A673 (cell line): ENCODE measurements at regions of chr4 and their contacts with region 1.

Region 1: DNA sequence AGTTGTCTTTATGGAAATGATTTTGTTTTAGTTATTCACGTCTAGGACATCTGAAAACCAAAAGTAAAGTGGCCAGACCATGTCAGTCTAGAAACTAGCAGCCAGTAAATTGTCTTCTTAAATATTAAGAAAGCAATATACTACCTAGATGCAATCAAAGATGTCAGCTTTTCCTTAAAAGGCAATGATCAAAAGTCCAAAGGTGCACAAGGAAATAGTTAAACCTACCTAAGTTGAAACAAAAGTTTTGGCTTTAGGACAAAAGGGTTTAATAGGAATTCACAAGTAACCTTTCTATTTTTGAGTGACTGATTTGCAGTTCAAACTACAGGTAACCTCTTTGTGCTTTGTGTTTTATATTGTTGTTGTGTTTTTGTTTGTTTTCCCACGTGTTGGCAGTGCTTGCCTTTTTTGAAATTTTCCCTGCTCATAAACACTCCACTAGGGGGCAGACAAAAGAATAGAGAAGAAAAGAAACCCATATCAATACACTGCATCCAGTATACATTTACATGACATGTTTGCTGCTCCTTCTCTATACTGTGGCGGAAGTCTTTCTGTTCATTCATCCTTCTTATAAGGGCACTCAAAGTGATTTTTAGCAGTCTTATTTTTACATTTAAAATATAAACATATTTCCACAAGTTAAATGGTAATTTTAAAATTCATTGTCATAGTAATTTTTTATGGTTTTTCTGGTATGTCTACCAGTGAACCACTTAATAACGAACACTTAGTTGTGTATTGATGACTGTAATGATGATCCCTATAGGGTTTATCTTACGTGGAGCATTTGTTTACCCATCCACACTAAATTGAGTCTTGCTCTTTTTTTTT is 62.7 kb downstream of the GAB1 start:
- DNase-seq: peak; percentile 78
- H3K4me3 ChIP-seq: no peak overlapping the region
- H3K27ac ChIP-seq: no peak overlapping the region
- H3K4me1 ChIP-seq: peaks cover 34% of the 10 kb centered on the region
- H3K27me3 ChIP-seq: no peaks in the 10 kb centered on the region
- CTCF ChIP-seq: peak; percentile 89

Region 2: DNA sequence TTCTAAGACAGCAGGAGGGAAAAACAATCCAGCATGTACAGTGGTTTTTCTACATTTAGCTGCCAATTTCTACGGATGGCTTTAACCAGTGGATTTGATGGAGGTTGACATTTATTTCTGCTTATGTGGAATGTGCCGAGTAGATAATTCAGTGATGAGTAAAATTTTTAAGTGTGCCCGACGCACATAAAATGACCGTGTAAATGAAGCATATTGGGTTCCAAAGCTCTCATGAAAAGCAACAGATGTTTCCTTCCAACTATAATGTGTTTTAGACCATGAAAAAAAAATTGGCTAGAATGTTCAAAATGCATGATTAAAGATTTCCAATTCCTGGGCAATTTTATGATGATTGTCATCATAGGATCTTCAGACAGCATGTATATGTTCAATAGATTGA is 567.3 kb before region 1 on chr4:
- CTCF ChIA-PET with region 1: no interaction called
- POLR2A ChIA-PET with region 1: no interaction called
- intact Hi-C with region 1: no loop called
- DNase-seq: no peak
- H3K4me3 ChIP-seq: no peak overlapping the region
- H3K27ac ChIP-seq: no peak overlapping the region
- H3K4me1 ChIP-seq: no peaks in the 10 kb centered on the region
- H3K27me3 ChIP-seq: no peaks in the 10 kb centered on the region
- CTCF ChIP-seq: no peak

Region 3: GRCh38 chr4:142961866-142962265 is 437.5 kb before region 1 on chr4:
- CTCF ChIA-PET with region 1: no interaction called
- POLR2A ChIA-PET with region 1: no interaction called
- intact Hi-C with region 1: no loop called
- DNase-seq: no peak
- H3K4me3 ChIP-seq: no peak overlapping the region
- H3K27ac ChIP-seq: no peak overlapping the region
- H3K4me1 ChIP-seq: no peaks in the 10 kb centered on the region
- H3K27me3 ChIP-seq: no peaks in the 10 kb centered on the region
- CTCF ChIP-seq: no peak

Region 4: GRCh38 chr4:143140696-143141095 is 258.6 kb before region 1 on chr4:
- CTCF ChIA-PET with region 1: no interaction called
- POLR2A ChIA-PET with region 1: no interaction called
- intact Hi-C with region 1: no loop called
- DNase-seq: no peak
- H3K4me3 ChIP-seq: no peak overlapping the region
- H3K27ac ChIP-seq: no peak overlapping the region
- H3K4me1 ChIP-seq: no peaks in the 10 kb centered on the region
- H3K27me3 ChIP-seq: peaks cover 11% of the 10 kb centered on the region
- CTCF ChIP-seq: no peak

Region 5: DNA sequence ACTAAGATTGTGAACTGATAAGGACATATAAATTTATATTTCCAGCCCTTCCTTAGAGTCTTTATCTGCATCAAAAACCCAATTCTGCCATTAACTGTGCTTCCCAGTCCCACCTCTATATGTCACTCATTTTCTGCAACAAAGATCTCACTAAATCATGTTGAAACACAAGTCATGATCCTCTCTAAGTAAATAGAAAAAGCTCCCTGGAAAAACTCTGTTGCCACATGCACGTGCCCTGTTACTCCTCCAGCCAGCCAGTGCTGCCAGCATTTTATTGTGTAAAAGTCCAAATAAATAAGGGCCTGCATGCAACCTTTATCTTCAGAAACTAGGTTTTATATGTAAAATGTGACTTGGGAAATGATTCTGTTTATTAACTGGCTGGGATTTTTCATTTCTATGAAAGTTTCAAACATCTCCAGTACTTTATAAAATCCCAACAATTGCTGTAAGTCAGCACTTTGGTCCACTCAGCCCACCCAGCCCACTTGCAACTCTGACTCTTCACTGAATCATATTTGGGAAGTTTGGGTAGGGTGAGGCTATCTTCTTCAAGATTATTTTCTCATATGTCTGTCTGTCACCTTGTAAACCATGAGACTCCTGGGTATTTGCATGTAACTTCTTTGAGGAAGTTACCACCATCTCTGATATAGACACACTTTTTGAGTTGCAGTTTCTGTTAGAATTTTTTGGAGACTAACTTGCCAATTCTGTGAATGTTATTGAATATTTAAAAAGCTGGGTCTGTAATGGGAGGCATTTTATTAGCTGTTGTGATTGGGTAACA is 74.2 kb after region 1 on chr4:
- CTCF ChIA-PET with region 1: no interaction called
- POLR2A ChIA-PET with region 1: no interaction called
- intact Hi-C with region 1: loop called (anchors 5 kb)
- DNase-seq: no peak
- H3K4me3 ChIP-seq: no peak overlapping the region
- H3K27ac ChIP-seq: no peak overlapping the region
- H3K4me1 ChIP-seq: no peaks in the 10 kb centered on the region
- H3K27me3 ChIP-seq: no peaks in the 10 kb centered on the region
- CTCF ChIP-seq: no peak

Region 6: GRCh38 chr4:143513306-143514168 is 114.2 kb after region 1 on chr4 and contains the start of gene SMARCA5:
- CTCF ChIA-PET with region 1: interaction called, 12 read pairs
- POLR2A ChIA-PET with region 1: no interaction called
- intact Hi-C with region 1: no loop called
- DNase-seq: peak; percentile 99
- H3K4me3 ChIP-seq: peak within 1 kb of the TSS; percentile 90
- H3K27ac ChIP-seq: peak within 1 kb of the TSS; percentile 93
- H3K4me1 ChIP-seq: peaks cover 13% of the 10 kb centered on the region
- H3K27me3 ChIP-seq: peaks cover 8% of the 10 kb centered on the region
- CTCF ChIP-seq: no peak
- total RNA-seq, gene SMARCA5: 77.1 and 77.6 TPM in 2 replicates

Region 7: GRCh38 chr4:143626134-143626911 is 227.0 kb after region 1 on chr4:
- CTCF ChIA-PET with region 1: no interaction called
- POLR2A ChIA-PET with region 1: no interaction called
- intact Hi-C with region 1: no loop called
- DNase-seq: no peak
- H3K4me3 ChIP-seq: no peak overlapping the region
- H3K27ac ChIP-seq: no peak overlapping the region
- H3K4me1 ChIP-seq: no peaks in the 10 kb centered on the region
- H3K27me3 ChIP-seq: no peaks in the 10 kb centered on the region
- CTCF ChIP-seq: no peak